ENCODE measurements at regions of chr12 and their contacts with region 1.

Region 1: DNA sequence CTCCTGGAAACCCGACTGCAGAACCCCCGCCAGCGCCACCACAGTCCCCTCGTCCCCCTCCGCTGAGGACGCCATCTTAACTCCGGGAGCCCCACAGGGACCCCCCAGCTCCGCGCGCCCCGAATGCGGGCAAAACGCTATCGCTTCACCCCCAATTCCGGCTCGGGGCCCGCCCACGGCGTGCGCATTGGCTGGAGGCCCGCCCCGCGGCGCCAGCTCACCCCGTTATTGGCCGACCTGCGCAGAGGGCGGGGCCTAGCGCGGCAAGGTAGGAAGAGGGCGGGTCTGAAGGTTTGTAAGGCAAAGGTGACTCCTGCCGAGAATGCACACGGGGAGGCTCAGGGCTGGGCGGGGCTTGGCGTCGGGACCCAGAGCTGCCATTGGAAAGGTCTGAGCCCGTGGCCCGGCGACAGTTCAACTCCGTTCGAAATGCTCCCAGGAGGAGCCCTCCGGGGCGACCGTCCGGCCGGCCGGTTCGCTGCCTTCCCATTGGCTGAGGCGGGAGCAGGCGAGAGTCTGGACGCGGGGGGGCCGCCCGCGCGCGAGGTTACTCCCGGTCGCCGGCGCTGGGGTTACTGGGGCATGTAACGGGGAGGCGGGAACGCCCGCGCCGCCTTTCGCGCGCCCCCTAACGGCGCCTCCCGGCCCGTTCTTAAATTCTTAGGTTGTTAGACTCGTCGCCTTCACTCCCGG is at the start of gene LPCAT3:
- DNase-seq: peak; percentile 90
- ATAC-seq: peak; percentile 90
- H3K4me3 ChIP-seq: peak within 1 kb of the TSS; percentile 97
- H3K27ac ChIP-seq: peak within 1 kb of the TSS; percentile 92
- H3K4me1 ChIP-seq: peaks cover 15% of the 10 kb centered on the region
- H3K27me3 ChIP-seq: no peaks in the 10 kb centered on the region
- CTCF ChIP-seq: peak; percentile 69
- total RNA-seq, gene LPCAT3: 16.3 and 21.5 TPM in 2 replicates

Region 2: DNA sequence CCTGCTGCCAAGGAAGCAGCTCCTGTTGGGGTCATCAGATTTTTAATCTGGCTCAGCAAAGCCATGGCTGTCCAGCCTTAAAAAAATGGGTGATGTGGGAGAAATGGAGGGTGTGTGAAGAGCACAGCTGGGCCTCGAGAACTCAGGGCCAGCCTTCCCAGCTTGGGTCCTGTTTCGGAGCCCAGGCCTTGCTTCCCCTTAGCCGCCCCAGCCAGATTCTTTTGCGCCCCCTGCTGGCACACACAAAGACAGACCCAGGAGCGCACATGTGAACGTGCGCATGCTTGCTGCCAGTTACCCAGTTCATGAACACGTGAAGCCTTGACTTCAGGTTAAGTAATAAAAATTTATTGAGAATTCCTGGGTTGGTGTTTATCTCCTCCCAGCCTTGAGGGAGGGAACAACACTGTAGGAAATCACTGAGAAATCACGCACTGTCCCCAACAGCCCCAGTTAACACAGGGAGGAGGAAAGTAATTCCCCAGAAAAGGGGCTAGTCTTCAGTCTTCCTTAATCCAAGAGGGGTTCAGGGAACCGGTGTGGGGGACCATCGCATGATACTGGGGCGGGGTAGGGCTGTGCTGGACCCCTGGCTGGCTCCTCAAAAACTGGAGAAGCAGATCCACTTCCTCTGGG is 53.4 kb before region 1 on chr12:
- CTCF ChIA-PET with region 1: no interaction called
- POLR2A ChIA-PET with region 1: no interaction called
- intact Hi-C with region 1: loop called (anchors 5 kb)
- DNase-seq: peak; percentile 64
- ATAC-seq: peak; percentile 62
- H3K4me3 ChIP-seq: no peak overlapping the region
- H3K27ac ChIP-seq: no peak overlapping the region
- H3K4me1 ChIP-seq: peaks cover 25% of the 10 kb centered on the region
- H3K27me3 ChIP-seq: no peaks in the 10 kb centered on the region
- CTCF ChIP-seq: peak; percentile 77

Region 3: GRCh38 chr12:7092229-7092985 is 73.9 kb after region 1 on chr12 and contains the start of gene C1R:
- CTCF ChIA-PET with region 1: no interaction called
- POLR2A ChIA-PET with region 1: no interaction called
- intact Hi-C with region 1: loop called (anchors 2 kb)
- DNase-seq: peak; percentile 63
- ATAC-seq: peak; percentile 72
- H3K4me3 ChIP-seq: peak within 1 kb of the TSS; percentile 66
- H3K27ac ChIP-seq: no peak within 1 kb of the TSS
- H3K4me1 ChIP-seq: peaks cover 3% of the 10 kb centered on the region; the same call in 1 of the 2 replicates
- H3K27me3 ChIP-seq: no peaks in the 10 kb centered on the region
- CTCF ChIP-seq: peak; percentile 82
- total RNA-seq, gene C1R: 4.4 and 9.6 TPM in 2 replicates

Region 4: DNA sequence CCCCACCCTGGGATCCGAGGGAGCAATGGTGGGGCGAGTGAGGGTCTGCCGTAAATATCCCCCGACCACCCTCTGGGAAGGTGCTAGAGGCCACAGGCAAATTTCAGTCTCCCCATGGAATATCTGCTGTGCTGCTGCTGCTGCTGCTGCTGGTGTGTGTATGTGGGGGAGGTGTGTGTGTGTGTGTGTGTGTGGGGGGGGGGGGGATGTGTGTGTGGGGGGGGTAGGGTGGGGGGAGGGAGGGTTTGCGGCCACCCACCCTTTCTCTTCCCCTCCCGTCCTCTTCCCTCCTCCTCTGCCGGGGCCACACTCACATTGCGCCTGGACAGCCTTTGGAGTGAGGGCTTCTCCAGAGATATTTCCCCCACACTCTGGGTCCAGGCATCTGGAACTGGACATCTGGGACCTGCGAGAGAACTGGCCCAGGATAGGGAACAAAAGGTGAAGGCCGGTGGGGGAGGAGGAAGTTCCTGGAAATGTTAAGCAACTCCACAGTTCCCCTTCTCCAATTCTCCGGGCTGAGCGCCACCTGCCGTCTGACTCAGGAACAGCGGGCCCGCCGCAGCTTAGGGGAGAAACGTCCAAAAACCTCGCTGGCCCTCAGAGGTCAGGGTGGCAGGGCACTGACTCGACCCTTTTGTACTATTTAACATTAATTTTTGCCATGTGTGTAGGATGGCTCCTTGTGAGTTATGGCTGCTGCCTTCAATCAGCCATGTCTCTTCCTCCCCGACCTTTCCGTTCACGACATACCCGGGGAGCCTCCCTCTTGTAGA is 90.5 kb after region 1 on chr12 and contains the start of gene C1RL:
- CTCF ChIA-PET with region 1: interaction called, 3 read pairs
- POLR2A ChIA-PET with region 1: no interaction called
- intact Hi-C with region 1: loop called (anchors 2 kb)
- DNase-seq: peak; percentile 81
- ATAC-seq: peak; percentile 68
- H3K4me3 ChIP-seq: peak within 1 kb of the TSS; percentile 92
- H3K27ac ChIP-seq: peak within 1 kb of the TSS; percentile 58
- H3K4me1 ChIP-seq: no peaks in the 10 kb centered on the region; the same call in 1 of the 2 replicates
- H3K27me3 ChIP-seq: no peaks in the 10 kb centered on the region
- CTCF ChIP-seq: peak; percentile 83
- total RNA-seq, gene C1RL: 8.2 and 8.9 TPM in 2 replicates

Measured in PC-3 (cell line).